ENCODE measurements at regions of chr22 and their contacts with region 1.

Region 1: GRCh38 chr22:49867303-49868265 is 13.9 kb downstream of the ZBED4 start:
- DNase-seq: peak; percentile 64 to 78 (median 69)
- H3K4me3 ChIP-seq: no peak overlapping the region
- H3K4me3 Mint-ChIP-seq: peak overlapping the region in 7 of 8 donors; percentile 52 to 79 (median 68)
- H3K27ac ChIP-seq: peak overlapping the region; percentile 24
- H3K27ac Mint-ChIP-seq: peak overlapping the region; percentile 83 to 96 (median 88)
- H3K4me1 ChIP-seq: peaks cover 57% of the 10 kb centered on the region
- H3K4me1 Mint-ChIP-seq: peaks cover 55 to 77% (median 62%) of the 10 kb centered on the region in 4 donors
- H3K27me3 ChIP-seq: no peaks in the 10 kb centered on the region
- H3K27me3 Mint-ChIP-seq: no peaks in the 10 kb centered on the region

Region 2: DNA sequence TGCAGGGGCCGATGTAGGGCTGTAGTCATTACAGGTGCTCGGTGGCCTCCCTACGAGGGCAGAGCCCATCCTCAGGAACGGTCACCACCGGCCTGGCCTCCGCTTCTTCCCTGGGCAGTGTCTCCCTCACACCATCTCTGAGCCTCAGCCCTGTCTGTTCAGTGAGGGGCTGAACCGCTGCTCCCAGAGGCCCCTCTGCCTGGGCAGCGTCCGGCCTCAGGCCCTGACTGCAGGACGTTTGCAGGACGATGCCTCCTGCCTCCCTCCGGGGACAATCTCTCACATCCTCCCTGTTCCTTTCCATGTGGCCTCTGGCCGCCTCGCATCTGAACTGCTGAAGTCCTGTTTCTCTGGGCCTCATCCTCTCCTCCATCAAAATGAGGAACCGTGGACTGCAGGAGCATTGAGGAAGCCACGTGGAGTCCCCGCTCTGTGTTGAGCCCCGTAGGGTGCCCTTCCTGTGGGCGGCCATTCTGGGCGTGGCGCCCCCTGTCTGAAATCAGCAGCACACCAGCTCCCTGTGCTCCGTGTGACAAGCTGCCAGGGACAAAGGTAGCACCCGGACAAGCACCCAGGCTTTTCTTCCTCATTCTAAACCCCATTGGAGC is 973.4 kb before region 1 on chr22:
- CTCF ChIA-PET with region 1: no interaction called
- POLR2A ChIA-PET with region 1: no interaction called
- intact Hi-C with region 1: no loop called
- DNase-seq: no peak
- H3K4me3 ChIP-seq: no peak overlapping the region
- H3K4me3 Mint-ChIP-seq: no peak overlapping the region
- H3K27ac ChIP-seq: no peak overlapping the region
- H3K27ac Mint-ChIP-seq: no peak overlapping the region
- H3K4me1 ChIP-seq: no peaks in the 10 kb centered on the region
- H3K4me1 Mint-ChIP-seq: no peaks in the 10 kb centered on the region
- H3K27me3 ChIP-seq: no peaks in the 10 kb centered on the region
- H3K27me3 Mint-ChIP-seq: peaks cover 3 to 4% of the 10 kb centered on the region in 2 donors

Region 3: GRCh38 chr22:49638788-49639187 is 228.8 kb before region 1 on chr22:
- CTCF ChIA-PET with region 1: no interaction called
- POLR2A ChIA-PET with region 1: no interaction called
- intact Hi-C with region 1: no loop called
- DNase-seq: no peak
- H3K4me3 ChIP-seq: no peak overlapping the region
- H3K4me3 Mint-ChIP-seq: no peak overlapping the region
- H3K27ac ChIP-seq: no peak overlapping the region
- H3K27ac Mint-ChIP-seq: peak overlapping the region in 1 of 7 donors; percentile 51
- H3K4me1 ChIP-seq: no peaks in the 10 kb centered on the region
- H3K4me1 Mint-ChIP-seq: peaks cover 0 to 8% (median 2%) of the 10 kb centered on the region in 4 donors
- H3K27me3 ChIP-seq: no peaks in the 10 kb centered on the region
- H3K27me3 Mint-ChIP-seq: no peaks in the 10 kb centered on the region

Region 4: GRCh38 chr22:49838771-49839717 is 28.5 kb before region 1 on chr22:
- CTCF ChIA-PET with region 1: no interaction called
- POLR2A ChIA-PET with region 1: interaction called, 4 read pairs
- intact Hi-C with region 1: loop called (anchors 5 kb)
- DNase-seq: peak; percentile 91 to 98 (median 95)
- H3K4me3 ChIP-seq: peak overlapping the region; percentile 7 to 53
- H3K4me3 Mint-ChIP-seq: peak overlapping the region; percentile 71 to 91 (median 84)
- H3K27ac ChIP-seq: peak overlapping the region; percentile 79
- H3K27ac Mint-ChIP-seq: peak overlapping the region; percentile 80 to 99 (median 97)
- H3K4me1 ChIP-seq: peaks cover 31% of the 10 kb centered on the region
- H3K4me1 Mint-ChIP-seq: peaks cover 16 to 38% (median 25%) of the 10 kb centered on the region in 4 donors
- H3K27me3 ChIP-seq: no peaks in the 10 kb centered on the region
- H3K27me3 Mint-ChIP-seq: no peaks in the 10 kb centered on the region

Region 5: DNA sequence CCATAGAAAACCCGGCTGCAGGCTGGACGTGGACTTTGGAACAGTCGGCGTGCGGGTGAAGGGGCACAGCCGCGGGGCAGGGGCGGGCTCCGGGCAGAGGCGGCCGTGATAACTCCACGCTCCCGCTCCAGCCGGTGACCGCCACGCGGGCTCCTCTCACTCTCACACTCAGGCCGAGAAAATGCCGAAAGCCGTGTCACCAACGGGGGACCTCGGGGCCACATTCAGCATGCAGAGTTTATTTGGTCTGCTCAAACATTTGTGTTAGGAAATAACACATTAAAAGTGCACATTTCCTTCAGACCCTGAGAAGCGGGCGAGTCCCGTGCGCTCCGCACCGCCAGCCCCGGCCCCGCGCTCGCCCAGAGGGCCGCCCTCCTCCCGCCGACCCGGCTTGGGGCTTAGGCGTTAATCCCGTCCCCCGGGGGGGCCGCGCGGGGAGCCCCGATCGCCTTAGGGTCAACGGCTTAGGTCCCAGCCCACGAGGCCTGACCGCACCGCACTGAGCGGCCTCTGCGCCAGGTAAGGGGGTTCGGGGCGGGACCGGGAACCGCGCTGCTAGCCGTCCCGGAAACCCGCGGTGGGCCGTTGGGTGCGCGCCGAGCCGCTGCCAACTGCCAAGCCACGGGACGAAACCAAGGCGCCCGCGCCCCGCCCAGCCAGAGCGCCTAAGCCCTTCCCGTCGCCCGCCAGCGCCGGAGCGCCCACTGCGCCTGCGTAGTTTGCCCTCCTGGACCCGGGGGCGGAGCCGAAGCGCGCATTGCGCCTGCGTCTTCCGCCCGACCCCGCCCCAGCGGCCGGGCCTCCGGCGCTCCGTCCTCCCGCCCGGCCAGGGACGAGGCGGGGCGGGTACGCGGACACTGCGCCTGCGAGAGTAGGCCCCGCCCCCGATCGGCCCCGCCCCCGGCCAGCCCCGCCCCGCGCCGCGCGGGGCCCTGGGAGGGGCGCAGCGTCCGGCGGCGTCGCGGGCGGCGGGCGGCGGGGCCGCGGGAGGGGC is 14.4 kb before region 1 on chr22 and contains the start of gene ZBED4:
- CTCF ChIA-PET with region 1: interaction called, 6 read pairs
- POLR2A ChIA-PET with region 1: interaction called, 39 read pairs
- intact Hi-C with region 1: loop called (anchors 2 kb)
- DNase-seq: peak; percentile 95 to 100 (median 99)
- H3K4me3 ChIP-seq: peak within 1 kb of the TSS; percentile 46 to 69
- H3K4me3 Mint-ChIP-seq: peak within 1 kb of the TSS; percentile 92 to 97 (median 94)
- H3K27ac ChIP-seq: peak within 1 kb of the TSS; percentile 75
- H3K27ac Mint-ChIP-seq: peak within 1 kb of the TSS; percentile 92 to 96 (median 94)
- H3K4me1 ChIP-seq: peaks cover 36% of the 10 kb centered on the region
- H3K4me1 Mint-ChIP-seq: peaks cover 29 to 64% (median 48%) of the 10 kb centered on the region in 4 donors
- H3K27me3 ChIP-seq: no peaks in the 10 kb centered on the region
- H3K27me3 Mint-ChIP-seq: no peaks in the 10 kb centered on the region
- total RNA-seq, gene ZBED4: 17.7 to 18.6 TPM

Region 6: GRCh38 chr22:49880281-49880680 is 12.7 kb after region 1 on chr22:
- CTCF ChIA-PET with region 1: interaction called, 3 read pairs
- POLR2A ChIA-PET with region 1: interaction called, 12 read pairs
- intact Hi-C with region 1: no loop called
- DNase-seq: no peak
- H3K4me3 ChIP-seq: no peak overlapping the region
- H3K4me3 Mint-ChIP-seq: peak overlapping the region in 3 of 8 donors; percentile 7 to 67 (median 13)
- H3K27ac ChIP-seq: no peak overlapping the region
- H3K27ac Mint-ChIP-seq: peak overlapping the region; percentile 6 to 71 (median 63)
- H3K4me1 ChIP-seq: peaks cover 23% of the 10 kb centered on the region
- H3K4me1 Mint-ChIP-seq: peaks cover 30 to 58% (median 38%) of the 10 kb centered on the region in 4 donors
- H3K27me3 ChIP-seq: no peaks in the 10 kb centered on the region
- H3K27me3 Mint-ChIP-seq: no peaks in the 10 kb centered on the region

Region 7: GRCh38 chr22:50044485-50045118 is 177.0 kb after region 1 on chr22:
- CTCF ChIA-PET with region 1: no interaction called
- POLR2A ChIA-PET with region 1: no interaction called
- intact Hi-C with region 1: no loop called
- DNase-seq: no peak
- H3K4me3 ChIP-seq: no peak overlapping the region
- H3K4me3 Mint-ChIP-seq: peak overlapping the region in 1 of 8 donors; percentile 23
- H3K27ac ChIP-seq: no peak overlapping the region
- H3K27ac Mint-ChIP-seq: no peak overlapping the region
- H3K4me1 ChIP-seq: peaks cover 8% of the 10 kb centered on the region
- H3K4me1 Mint-ChIP-seq: peaks cover 5 to 14% (median 11%) of the 10 kb centered on the region in 4 donors
- H3K27me3 ChIP-seq: no peaks in the 10 kb centered on the region
- H3K27me3 Mint-ChIP-seq: peaks cover 6 to 12% of the 10 kb centered on the region in 2 donors

Region 8: DNA sequence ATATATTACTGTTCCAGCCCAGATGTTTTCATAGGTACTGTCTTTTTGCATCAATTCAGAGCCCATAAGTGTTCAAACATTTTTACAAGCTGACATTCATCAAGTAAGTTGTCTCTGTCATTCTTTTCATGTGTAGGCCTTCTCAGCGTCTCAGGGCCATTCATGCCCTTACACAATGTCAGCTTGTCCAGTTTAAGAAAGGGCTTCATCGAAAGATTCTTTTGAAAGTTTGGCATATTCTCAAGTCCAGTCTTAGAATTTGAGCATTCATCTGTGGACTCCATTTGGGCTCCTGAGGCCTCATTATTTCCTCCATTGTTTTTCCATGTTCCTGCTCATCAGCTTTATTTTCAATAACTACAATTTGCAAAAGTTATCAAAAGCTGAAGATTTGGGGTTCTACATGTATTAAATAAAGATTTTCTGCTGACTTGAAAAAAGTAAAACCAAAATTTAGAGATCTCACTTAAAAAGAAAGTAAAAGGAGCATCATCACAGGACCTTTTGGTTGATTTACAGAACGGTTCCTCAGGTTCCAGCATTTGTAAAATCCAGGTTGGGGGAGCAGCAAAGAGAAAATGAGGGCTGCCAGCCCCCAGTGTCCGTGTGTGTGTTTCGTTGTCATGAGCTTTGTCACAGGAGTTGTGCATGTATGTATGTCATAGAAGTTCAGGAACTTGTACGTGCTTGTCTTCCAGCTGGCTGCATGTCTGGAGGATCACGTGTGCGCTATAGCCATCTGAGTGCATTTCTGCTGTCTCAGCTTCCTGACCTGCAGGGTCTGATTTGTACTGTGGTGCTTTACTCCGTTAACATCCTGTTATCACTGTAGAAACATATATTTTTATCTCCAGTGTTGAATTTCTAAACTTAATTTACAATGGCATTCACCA is 237.9 kb after region 1 on chr22:
- CTCF ChIA-PET with region 1: no interaction called
- POLR2A ChIA-PET with region 1: no interaction called
- intact Hi-C with region 1: no loop called
- DNase-seq: peak in 1 of 5 donors; percentile 2
- H3K4me3 ChIP-seq: no peak overlapping the region
- H3K4me3 Mint-ChIP-seq: peak overlapping the region; percentile 64 to 74 (median 71)
- H3K27ac ChIP-seq: no peak overlapping the region
- H3K27ac Mint-ChIP-seq: peak overlapping the region in 4 of 7 donors; percentile 47 to 60 (median 52)
- H3K4me1 ChIP-seq: no peaks in the 10 kb centered on the region
- H3K4me1 Mint-ChIP-seq: peaks cover 4 to 7% (median 5%) of the 10 kb centered on the region in 4 donors
- H3K27me3 ChIP-seq: no peaks in the 10 kb centered on the region
- H3K27me3 Mint-ChIP-seq: peaks cover 5 to 7% of the 10 kb centered on the region in 2 donors

Measured in CD4-positive, alpha-beta memory T cell (primary cell).